Sigmoid colon (tissue), 7 donors: ENCODE measurements at regions of chrX and their contacts with region 1.

Region 1: GRCh38 chrX:47560831-47561652 is at the start of gene ARAF:
- DNase-seq: peak; percentile 99
- H3K4me3 ChIP-seq: peak within 1 kb of the TSS; percentile 61 to 74 (median 61)
- H3K27ac ChIP-seq: peak within 1 kb of the TSS; percentile 89 to 95 (median 92)
- H3K4me1 ChIP-seq: peaks cover 0 to 15% (median 11%) of the 10 kb centered on the region in 4 donors
- H3K27me3 ChIP-seq: peaks cover 0 to 3% (median 0%) of the 10 kb centered on the region in 3 donors
- CTCF ChIP-seq: no peak
- EP300 ChIP-seq: no peak
- POLR2A ChIP-seq: no peak
- total RNA-seq, gene ARAF: 25.7 to 30.3 (median 28.0) TPM

Region 2: DNA sequence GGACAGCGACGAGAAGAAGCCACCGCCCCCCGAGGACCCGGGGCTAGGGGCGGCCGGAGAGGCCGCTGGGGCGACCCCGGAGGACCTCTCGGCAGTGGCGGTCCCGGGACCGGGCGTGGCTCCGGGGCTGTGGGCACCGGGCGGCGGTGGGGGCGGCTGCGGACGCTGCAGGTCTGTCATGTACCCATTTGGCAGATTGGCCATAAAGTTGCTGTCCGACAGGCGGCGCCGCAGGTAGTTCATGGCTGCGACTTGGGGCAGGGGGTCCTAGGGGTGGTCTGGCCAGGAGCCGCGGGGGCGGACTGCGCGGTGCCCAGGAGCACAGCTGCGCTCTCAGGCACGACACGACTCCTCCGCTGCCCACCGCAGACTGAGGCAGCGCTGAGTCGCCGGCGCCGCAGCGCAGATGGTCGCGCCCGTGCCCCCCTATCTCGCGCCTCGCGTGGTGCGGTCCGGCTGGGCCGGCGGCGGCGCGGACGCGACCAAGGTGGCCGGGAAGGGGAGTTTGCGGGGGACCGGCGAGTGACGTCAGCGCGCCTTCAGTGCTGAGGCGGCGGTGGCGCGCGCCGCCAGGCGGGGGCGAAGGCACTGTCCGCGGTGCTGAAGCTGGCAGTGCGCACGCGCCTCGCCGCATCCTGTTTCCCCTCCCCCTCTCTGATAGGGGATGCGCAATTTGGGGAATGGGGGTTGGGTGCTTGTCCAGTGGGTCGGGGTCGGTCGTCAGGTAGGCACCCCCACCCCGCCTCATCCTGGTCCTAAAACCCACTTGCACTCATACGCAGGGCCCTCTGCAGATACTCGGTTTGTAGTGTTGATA is 58.7 kb after region 1 on chrX and contains the start of gene SYN1:
- intact Hi-C with region 1: loop called (anchors 2 kb)
- DNase-seq: peak; percentile 86
- H3K4me3 ChIP-seq: peak within 1 kb of the TSS in 3 of 4 donors; percentile 16 to 40 (median 35)
- H3K27ac ChIP-seq: no peak within 1 kb of the TSS
- H3K4me1 ChIP-seq: peaks cover 0 to 5% (median 0%) of the 10 kb centered on the region in 4 donors
- H3K27me3 ChIP-seq: peaks cover 0 to 10% (median 0%) of the 10 kb centered on the region in 3 donors
- CTCF ChIP-seq: no peak
- EP300 ChIP-seq: no peak
- POLR2A ChIP-seq: no peak
- total RNA-seq, gene SYN1: 0.16 to 1.4 (median 1.0) TPM

Region 3: DNA sequence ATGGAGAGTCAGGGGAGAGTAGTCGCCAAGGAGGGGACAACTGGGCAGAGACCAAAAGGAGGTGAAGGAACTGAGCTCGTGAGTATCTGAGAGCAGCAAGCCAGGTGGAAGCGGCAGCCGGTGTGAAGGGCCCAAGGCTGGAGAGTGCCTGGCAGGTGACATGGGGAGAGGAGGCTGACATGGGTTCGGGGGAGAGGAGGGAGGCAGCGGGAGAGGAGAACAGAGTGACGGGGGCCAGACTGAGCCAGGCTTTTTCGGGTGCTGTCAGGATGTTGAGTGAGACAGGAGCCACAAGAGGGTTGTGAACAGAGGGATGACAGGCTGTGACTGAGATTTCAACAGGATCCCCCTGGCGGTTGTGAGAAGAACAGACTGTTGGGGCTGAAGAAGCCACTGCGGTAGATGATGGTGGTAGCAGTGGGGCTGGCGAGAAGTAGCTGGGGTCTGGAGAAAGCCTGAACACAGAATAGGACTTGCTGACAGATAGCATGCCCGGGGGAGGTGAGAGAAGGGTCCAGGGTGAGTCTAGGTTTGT is 83.6 kb after region 1 on chrX:
- intact Hi-C with region 1: loop called (anchors 5 kb)
- DNase-seq: no peak
- H3K4me3 ChIP-seq: no peak overlapping the region
- H3K27ac ChIP-seq: no peak overlapping the region
- H3K4me1 ChIP-seq: peaks cover 0 to 14% (median 10%) of the 10 kb centered on the region in 4 donors
- H3K27me3 ChIP-seq: no peaks in the 10 kb centered on the region
- CTCF ChIP-seq: peak in 1 of 4 experiments; percentile 19
- EP300 ChIP-seq: no peak
- POLR2A ChIP-seq: no peak

Region 4: DNA sequence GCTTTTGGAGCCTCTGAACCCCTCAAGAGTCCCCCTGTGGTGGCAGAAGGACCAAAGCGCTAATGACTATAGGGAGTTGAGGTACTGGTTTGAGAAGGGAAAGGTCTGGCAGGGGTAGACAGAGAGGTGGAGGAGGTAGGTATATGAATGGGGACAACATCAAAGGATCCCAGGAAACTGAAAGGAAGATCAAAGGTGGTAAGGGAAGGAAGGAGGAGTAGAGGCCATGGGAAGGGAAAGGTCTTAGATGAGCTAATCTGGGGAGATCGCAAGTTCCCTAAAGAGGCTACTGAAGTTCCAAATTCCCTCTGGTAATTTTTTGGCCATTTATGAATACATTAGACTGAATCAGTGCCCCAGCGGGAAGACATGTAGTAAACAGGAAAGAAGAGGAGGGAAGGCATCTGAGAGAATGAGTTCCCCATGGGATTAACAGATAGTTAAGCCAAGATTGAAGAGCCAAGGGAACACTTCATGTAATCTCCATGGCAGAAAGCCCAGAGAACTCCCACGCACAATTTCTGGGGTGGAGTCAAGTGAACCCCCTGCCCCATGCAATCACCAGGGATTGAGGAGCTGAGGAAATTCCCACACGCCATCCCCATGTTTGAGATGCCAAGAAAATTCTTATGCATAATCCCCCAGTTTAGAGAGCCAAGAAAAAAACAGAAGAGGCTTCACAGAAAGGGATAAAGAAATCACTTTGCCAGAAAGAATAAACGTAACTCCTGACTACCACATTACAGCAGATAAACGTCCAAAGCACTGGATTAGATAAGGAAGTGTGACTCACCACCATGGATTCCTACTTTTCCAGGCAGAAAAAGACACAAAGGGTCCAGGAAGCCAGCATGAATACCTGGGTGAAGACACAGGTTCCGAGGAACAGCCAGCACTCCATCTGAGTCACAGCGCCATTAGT is 484.6 kb after region 1 on chrX:
- intact Hi-C with region 1: no loop called
- DNase-seq: no peak
- H3K4me3 ChIP-seq: no peak overlapping the region
- H3K27ac ChIP-seq: peak overlapping the region in 1 of 4 donors; percentile 12
- H3K4me1 ChIP-seq: no peaks in the 10 kb centered on the region
- H3K27me3 ChIP-seq: no peaks in the 10 kb centered on the region
- CTCF ChIP-seq: no peak
- EP300 ChIP-seq: no peak
- POLR2A ChIP-seq: no peak